Activated naive CD4-positive, alpha-beta T cell treated with anti-CD3 and anti-CD28 coated beads for 36 hours (primary cell): ENCODE measurements at regions of chr18 and their contacts with region 1.

Region 1: DNA sequence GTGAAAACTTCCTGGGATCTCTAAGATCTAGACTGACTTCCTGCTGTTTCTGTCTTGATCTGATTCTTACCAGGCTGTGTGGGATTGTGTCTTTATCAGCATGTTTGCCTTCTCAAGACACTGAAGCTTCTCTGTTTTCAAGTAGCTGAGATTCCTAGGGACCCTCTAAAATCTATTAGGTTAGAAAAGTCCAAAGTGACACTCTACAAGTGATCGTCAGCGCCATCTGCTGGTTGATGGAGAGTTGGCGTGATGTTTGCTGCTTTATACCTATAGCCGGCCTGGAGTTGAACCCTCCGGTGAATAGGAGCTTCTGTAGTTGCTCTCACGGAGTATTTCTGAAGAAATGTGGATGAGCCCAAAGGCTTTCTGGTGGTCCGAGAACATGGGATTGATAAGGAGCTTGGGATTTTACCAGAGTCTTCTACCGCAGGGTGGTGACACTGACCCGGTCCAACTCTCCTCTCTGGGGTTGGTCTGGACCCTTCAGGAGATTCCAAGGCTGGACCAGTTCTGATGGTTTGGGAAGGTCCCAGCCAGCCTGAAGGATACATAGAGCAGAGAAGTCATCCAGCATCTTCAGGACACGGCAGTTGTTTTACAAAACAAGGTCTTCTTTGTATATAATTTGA is 96.0 kb upstream of the TTC39C start:
- DNase-seq: peak; percentile 91
- H3K4me3 Mint-ChIP-seq: no peak overlapping the region
- H3K27ac Mint-ChIP-seq: no peak overlapping the region
- H3K4me1 Mint-ChIP-seq: peaks cover 11% of the 10 kb centered on the region
- H3K27me3 Mint-ChIP-seq: no peaks in the 10 kb centered on the region

Region 2: GRCh38 chr18:23143016-23143814 is 775.3 kb before region 1 on chr18:
- CTCF ChIA-PET with region 1: no interaction called
- intact Hi-C with region 1: no loop called
- DNase-seq: no peak
- H3K4me3 Mint-ChIP-seq: no peak overlapping the region
- H3K27ac Mint-ChIP-seq: no peak overlapping the region
- H3K4me1 Mint-ChIP-seq: peaks cover 2% of the 10 kb centered on the region
- H3K27me3 Mint-ChIP-seq: peaks cover 1% of the 10 kb centered on the region

Region 3: GRCh38 chr18:23619388-23619881 is 299.1 kb before region 1 on chr18:
- CTCF ChIA-PET with region 1: interaction called, 3 read pairs
- intact Hi-C with region 1: loop called (anchors 1 kb)
- DNase-seq: peak; percentile 9
- H3K4me3 Mint-ChIP-seq: peak overlapping the region; percentile 50
- H3K27ac Mint-ChIP-seq: no peak overlapping the region
- H3K4me1 Mint-ChIP-seq: no peaks in the 10 kb centered on the region
- H3K27me3 Mint-ChIP-seq: peaks cover 36% of the 10 kb centered on the region

Region 4: DNA sequence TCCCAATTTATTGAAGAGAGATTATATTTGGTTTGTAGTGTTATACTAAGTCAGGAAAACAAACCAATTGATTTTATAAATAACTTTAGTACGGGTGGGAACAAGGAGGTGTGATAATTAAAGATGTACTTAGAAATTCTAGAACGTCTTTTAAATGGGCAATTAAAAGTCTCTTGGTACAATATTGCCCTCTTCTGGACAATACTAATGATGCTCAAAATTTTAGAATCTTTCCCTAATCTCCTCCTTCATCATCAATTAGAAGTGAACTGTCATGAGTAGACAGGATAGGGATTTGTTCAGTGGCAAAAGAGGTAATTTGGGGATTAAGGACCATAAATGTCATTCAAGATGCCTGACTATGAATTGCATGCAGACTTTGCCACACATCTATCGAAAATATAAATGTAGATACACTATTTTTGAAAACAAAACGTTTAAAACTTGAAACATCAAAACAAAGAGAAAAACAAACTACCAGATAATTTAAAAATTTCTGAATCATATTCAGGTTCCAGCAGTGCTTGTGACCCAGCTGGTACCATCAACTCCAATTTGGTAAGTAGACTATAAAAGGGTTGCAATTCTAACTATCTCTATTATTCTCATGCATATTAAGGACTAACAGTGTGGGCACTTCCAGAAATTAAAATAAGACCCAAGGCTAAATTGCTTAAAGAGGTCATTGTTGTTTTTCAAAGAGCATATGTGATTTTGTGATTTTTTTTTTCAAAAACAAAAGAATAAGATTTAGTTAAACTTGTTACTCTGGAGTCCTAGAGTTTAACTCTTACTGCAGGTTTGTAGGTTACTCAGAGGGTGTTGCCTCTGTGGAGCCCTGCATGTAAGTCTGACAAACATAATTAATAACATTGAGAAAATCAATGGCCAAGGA is 105.7 kb before region 1 on chr18:
- CTCF ChIA-PET with region 1: interaction called, 5 read pairs
- intact Hi-C with region 1: loop called (anchors 1 kb)
- DNase-seq: no peak
- H3K4me3 Mint-ChIP-seq: no peak overlapping the region
- H3K27ac Mint-ChIP-seq: no peak overlapping the region
- H3K4me1 Mint-ChIP-seq: peaks cover 21% of the 10 kb centered on the region
- H3K27me3 Mint-ChIP-seq: no peaks in the 10 kb centered on the region

Region 5: GRCh38 chr18:23837591-23837990 is 80.9 kb before region 1 on chr18:
- CTCF ChIA-PET with region 1: interaction called, 13 read pairs
- intact Hi-C with region 1: no loop called
- DNase-seq: peak; percentile 22
- H3K4me3 Mint-ChIP-seq: no peak overlapping the region
- H3K27ac Mint-ChIP-seq: no peak overlapping the region
- H3K4me1 Mint-ChIP-seq: peaks cover 9% of the 10 kb centered on the region
- H3K27me3 Mint-ChIP-seq: no peaks in the 10 kb centered on the region

Region 6: GRCh38 chr18:23943104-23943503 is 24.6 kb after region 1 on chr18:
- CTCF ChIA-PET with region 1: interaction called, 12 read pairs
- intact Hi-C with region 1: no loop called
- DNase-seq: peak; percentile 69
- H3K4me3 Mint-ChIP-seq: peak overlapping the region; percentile 1
- H3K27ac Mint-ChIP-seq: no peak overlapping the region
- H3K4me1 Mint-ChIP-seq: peaks cover 27% of the 10 kb centered on the region
- H3K27me3 Mint-ChIP-seq: peaks cover 2% of the 10 kb centered on the region

Region 7: GRCh38 chr18:24118750-24119577 is 200.4 kb after region 1 on chr18:
- CTCF ChIA-PET with region 1: interaction called, 7 read pairs
- intact Hi-C with region 1: loop called (anchors 1 kb)
- DNase-seq: peak; percentile 91
- H3K4me3 Mint-ChIP-seq: no peak overlapping the region
- H3K27ac Mint-ChIP-seq: peak overlapping the region; percentile 38
- H3K4me1 Mint-ChIP-seq: peaks cover 15% of the 10 kb centered on the region
- H3K27me3 Mint-ChIP-seq: no peaks in the 10 kb centered on the region